ENCODE measurements at regions of chr6 and their contacts with region 1.

Region 1: DNA sequence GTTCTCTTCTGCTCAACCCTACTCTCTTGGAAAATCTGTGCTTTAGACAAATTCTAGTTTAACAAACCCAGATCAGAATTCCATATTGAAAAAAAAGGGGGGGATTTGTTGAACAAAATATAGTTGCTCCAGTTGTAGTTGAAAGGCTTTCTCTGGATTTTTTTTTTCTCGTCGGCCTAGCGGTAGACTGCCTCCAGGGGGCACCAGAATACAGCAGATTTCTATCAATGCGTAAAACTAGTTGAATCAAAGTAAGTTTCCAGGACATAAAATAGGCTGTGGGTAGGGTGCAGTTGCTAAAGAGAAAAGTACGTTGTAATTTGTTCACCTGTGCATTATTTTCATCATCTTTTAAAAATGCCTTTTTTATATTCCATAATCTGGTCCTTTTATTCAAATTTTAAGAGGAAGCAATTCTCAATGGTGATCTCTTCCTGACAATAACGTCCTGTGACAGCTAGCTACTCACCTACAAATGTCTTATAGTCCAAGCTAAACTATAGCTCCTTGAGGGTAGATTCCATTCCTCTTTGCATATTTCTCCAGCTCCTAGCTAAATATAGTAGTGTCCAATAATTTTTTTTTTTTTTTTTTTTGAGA is 105.4 kb downstream of the PERP start:
- DNase-seq: peak; percentile 21 to 43
- ATAC-seq: peak in 1 of 2 experiments; percentile 63; a peak in 3 of 6 replicates
- H3K4me3 ChIP-seq: no peak overlapping the region
- H3K27ac ChIP-seq: no peak overlapping the region
- H3K4me1 ChIP-seq: peaks cover 18% of the 10 kb centered on the region
- CTCF ChIP-seq: peak; percentile 80
- EP300 ChIP-seq: no peak
- POLR2A ChIP-seq: no peak
- RAD21 ChIP-seq: peak; percentile 91 to 92

Region 2: GRCh38 chr6:138109042-138109997 is 107.5 kb after region 1 on chr6:
- CTCF ChIA-PET with region 1: interaction called, 61 read pairs
- POLR2A ChIA-PET with region 1: no interaction called
- DNase-seq: peak; percentile 40 to 69
- ATAC-seq: 0 out of 6 replicates have a peak, but pooled peaks of 1 of the 2 experiments have one; percentile 5
- H3K4me3 ChIP-seq: no peak overlapping the region
- H3K27ac ChIP-seq: no peak overlapping the region; a peak in 1 of 6 replicates
- H3K4me1 ChIP-seq: peaks cover 20% of the 10 kb centered on the region
- CTCF ChIP-seq: peak; percentile 83
- EP300 ChIP-seq: no peak
- POLR2A ChIP-seq: no peak
- RAD21 ChIP-seq: peak; percentile 89 to 90

Measured in A549 (cell line).